Breast epithelium (tissue), 4 donors: ENCODE measurements at regions of chr6 and their contacts with region 1.

Region 1: GRCh38 chr6:142946181-142946923 is 1.4 kb upstream of the HIVEP2 start:
- DNase-seq: peak; percentile 98
- H3K4me3 ChIP-seq: peak overlapping the region; percentile 87 to 99 (median 95)
- H3K27ac ChIP-seq: peak overlapping the region; percentile 100
- H3K4me1 ChIP-seq: no peaks in the 10 kb centered on the region
- H3K27me3 ChIP-seq: no peaks in the 10 kb centered on the region
- CTCF ChIP-seq: no peak
- POLR2A ChIP-seq: no peak

Region 2: DNA sequence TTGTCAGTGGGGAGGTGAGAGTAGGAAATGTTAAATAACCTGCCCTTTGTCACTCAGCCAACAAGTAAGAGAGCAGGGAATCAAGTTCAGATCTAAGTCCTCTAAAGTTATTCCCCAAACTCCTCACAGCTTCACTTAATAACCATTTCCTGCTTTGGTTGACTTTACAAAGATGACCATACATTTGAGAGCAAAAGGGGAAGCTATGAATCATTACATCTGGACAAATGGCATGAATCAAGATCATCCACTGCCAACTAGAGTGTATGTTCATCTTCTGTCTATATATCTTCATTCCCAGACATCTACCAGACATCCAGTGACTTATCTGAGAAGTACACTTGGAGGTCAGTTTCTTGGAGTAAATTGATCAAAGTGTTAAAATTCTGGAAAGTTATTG is 13.7 kb after region 1 on chr6:
- intact Hi-C with region 1: no loop called
- DNase-seq: no peak
- H3K4me3 ChIP-seq: no peak overlapping the region
- H3K27ac ChIP-seq: no peak overlapping the region
- H3K4me1 ChIP-seq: no peaks in the 10 kb centered on the region
- H3K27me3 ChIP-seq: no peaks in the 10 kb centered on the region
- CTCF ChIP-seq: no peak
- POLR2A ChIP-seq: no peak

Region 3: GRCh38 chr6:143842902-143843676 is 896.7 kb after region 1 on chr6 and contains the start of gene LTV1:
- intact Hi-C with region 1: loop called (anchors 5 kb)
- DNase-seq: peak; percentile 94
- H3K4me3 ChIP-seq: peak within 1 kb of the TSS; percentile 66 to 80 (median 75)
- H3K27ac ChIP-seq: peak within 1 kb of the TSS; percentile 95 to 98
- H3K4me1 ChIP-seq: peaks cover 0 to 8% of the 10 kb centered on the region in 2 donors
- H3K27me3 ChIP-seq: no peaks in the 10 kb centered on the region
- CTCF ChIP-seq: peak in 1 of 3 donors; percentile 18
- POLR2A ChIP-seq: peak; percentile 50
- total RNA-seq, gene LTV1: 16.2 to 22.0 (median 16.7) TPM